Activated CD8-positive, alpha-beta T cell treated with anti-CD3 and anti-CD28 coated beads for 36 hours (primary cell): ENCODE measurements at regions of chr10 and their contacts with region 1.

Region 1: GRCh38 chr10:69004821-69005220 is 16.2 kb downstream of the KIFBP start:
- DNase-seq: no peak
- ATAC-seq: peak; percentile 64
- H3K4me3 Mint-ChIP-seq: no peak overlapping the region
- H3K27ac Mint-ChIP-seq: no peak overlapping the region
- H3K4me1 Mint-ChIP-seq: peaks cover 9% of the 10 kb centered on the region
- H3K27me3 Mint-ChIP-seq: no peaks in the 10 kb centered on the region
- CTCF ChIP-seq: peak; percentile 78

Region 2: DNA sequence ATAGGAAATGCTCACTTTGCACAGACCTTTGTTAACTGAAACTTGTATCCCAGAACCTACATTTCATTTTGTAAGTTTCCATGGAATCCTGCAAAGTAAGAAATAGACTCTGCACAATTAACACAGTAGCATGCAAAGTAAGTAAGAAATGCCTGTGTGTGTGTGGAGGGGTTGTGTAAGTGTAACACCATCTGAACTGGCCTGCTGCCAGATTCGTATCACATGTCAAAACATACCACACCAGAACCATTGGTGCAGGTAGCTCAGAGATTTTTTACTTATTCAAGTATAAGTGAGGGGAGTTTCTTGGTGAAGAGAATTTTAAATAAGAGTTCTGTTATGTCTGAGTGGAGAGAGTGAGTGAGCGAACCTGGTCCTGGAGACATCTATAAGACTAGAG is 66.7 kb before region 1 on chr10:
- CTCF ChIA-PET with region 1: no interaction called
- POLR2A ChIA-PET with region 1: no interaction called
- intact Hi-C with region 1: no loop called
- DNase-seq: no peak
- ATAC-seq: no peak
- H3K4me3 Mint-ChIP-seq: no peak overlapping the region
- H3K27ac Mint-ChIP-seq: peak overlapping the region; percentile 58
- H3K4me1 Mint-ChIP-seq: peaks cover 9% of the 10 kb centered on the region
- H3K27me3 Mint-ChIP-seq: no peaks in the 10 kb centered on the region
- CTCF ChIP-seq: no peak

Region 3: GRCh38 chr10:68988530-68989316 is 16.1 kb before region 1 on chr10 and contains the start of gene KIFBP:
- CTCF ChIA-PET with region 1: interaction called, 12 read pairs
- POLR2A ChIA-PET with region 1: interaction called, 3 read pairs
- intact Hi-C with region 1: no loop called
- DNase-seq: peak; percentile 92
- ATAC-seq: peak; percentile 87
- H3K4me3 Mint-ChIP-seq: peak within 1 kb of the TSS; percentile 98
- H3K27ac Mint-ChIP-seq: peak within 1 kb of the TSS; percentile 95
- H3K4me1 Mint-ChIP-seq: peaks cover 50% of the 10 kb centered on the region
- H3K27me3 Mint-ChIP-seq: no peaks in the 10 kb centered on the region
- CTCF ChIP-seq: peak; percentile 39
- total RNA-seq, gene KIFBP: 9.7 to 10.9 TPM

Region 4: GRCh38 chr10:69061305-69062161 is 56.7 kb after region 1 on chr10:
- CTCF ChIA-PET with region 1: interaction called, 20 read pairs
- POLR2A ChIA-PET with region 1: interaction called, 3 read pairs
- intact Hi-C with region 1: no loop called
- DNase-seq: peak; percentile 35
- ATAC-seq: peak; percentile 35
- H3K4me3 Mint-ChIP-seq: peak overlapping the region; percentile 53
- H3K27ac Mint-ChIP-seq: peak overlapping the region; percentile 81
- H3K4me1 Mint-ChIP-seq: peaks cover 51% of the 10 kb centered on the region
- H3K27me3 Mint-ChIP-seq: no peaks in the 10 kb centered on the region
- CTCF ChIP-seq: no peak

Region 5: DNA sequence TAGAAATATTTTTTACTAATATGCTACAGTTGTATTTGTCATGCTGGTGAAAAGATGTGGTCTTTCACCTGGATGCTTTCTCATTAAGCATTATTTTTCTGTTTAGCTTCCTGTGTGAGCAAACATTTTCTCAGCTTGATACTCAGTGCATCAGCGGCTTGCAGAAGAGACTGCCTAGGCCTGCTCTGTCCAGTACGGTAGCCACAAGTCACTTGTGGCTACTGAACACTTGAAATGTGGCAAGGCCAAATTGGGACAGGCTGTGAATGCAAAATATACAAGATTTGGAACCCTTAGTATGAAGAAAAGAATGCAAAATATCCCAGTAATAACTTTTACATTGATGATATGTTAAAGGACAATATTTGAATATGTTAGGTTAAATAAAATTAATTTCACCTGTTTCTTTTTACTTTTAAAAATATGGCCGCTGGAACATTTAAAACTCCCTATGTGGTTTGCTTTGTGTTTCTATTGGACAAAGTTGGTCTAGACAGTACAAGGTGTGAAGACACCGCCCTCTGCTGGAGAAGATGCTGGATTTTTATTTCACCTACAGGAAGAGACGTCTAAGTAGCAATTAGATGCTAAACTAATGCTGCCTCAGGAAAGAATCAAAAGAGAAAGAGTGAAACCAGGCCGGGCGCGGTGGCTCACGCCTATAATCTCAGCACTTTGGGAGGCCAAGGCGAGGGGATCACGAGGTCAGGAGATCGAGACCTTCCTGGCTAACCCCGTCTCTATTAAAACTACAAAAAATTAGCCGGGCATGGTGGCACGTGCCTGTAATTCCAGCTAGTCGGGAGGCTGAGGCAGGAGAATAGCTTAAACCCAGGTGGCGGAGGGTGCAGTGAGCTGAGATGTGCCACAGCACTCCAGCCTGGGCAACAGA is 88.4 kb after region 1 on chr10:
- CTCF ChIA-PET with region 1: interaction called, 97 read pairs
- POLR2A ChIA-PET with region 1: interaction called, 21 read pairs
- intact Hi-C with region 1: loop called (anchors 2 kb)
- DNase-seq: peak; percentile 94
- ATAC-seq: peak; percentile 26
- H3K4me3 Mint-ChIP-seq: peak overlapping the region; percentile 24
- H3K27ac Mint-ChIP-seq: peak overlapping the region; percentile 68
- H3K4me1 Mint-ChIP-seq: peaks cover 52% of the 10 kb centered on the region
- H3K27me3 Mint-ChIP-seq: peaks cover 1% of the 10 kb centered on the region
- CTCF ChIP-seq: peak; percentile 80

Region 6: DNA sequence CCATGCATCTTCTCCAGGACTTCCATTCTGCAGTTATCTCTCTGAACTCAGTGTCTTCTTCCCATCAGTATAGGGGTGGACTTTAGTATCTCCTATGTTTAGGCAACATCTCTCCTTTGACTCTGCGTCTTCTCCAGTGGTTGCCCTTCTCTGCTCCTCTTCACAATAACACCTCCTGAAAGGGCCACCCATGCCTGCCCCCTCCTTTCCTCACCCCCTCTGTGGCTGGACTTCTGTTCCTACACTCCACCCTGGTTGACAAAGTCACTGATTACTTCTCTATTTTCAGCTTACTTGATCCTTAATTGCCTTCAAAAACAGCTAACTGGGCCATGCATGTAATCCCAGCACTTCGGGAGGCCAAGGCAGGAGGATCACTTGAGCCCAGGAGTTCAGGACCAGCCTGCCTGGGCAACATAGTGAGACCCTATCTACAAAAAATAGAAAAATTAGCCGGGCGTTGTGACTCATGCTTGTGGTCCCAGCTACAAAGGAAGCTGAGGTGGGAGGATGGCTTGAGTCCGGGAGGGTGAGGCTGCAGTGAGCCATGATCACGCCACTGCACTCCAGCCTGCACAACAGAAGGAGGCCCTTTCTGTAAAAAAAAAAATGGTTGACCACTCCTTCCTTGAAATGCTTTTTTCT is 96.8 kb after region 1 on chr10:
- CTCF ChIA-PET with region 1: interaction called, 17 read pairs
- POLR2A ChIA-PET with region 1: interaction called, 7 read pairs
- intact Hi-C with region 1: no loop called
- DNase-seq: peak; percentile 70
- ATAC-seq: peak; percentile 81
- H3K4me3 Mint-ChIP-seq: peak overlapping the region; percentile 10
- H3K27ac Mint-ChIP-seq: peak overlapping the region; percentile 83
- H3K4me1 Mint-ChIP-seq: peaks cover 36% of the 10 kb centered on the region
- H3K27me3 Mint-ChIP-seq: no peaks in the 10 kb centered on the region
- CTCF ChIP-seq: no peak

Region 7: DNA sequence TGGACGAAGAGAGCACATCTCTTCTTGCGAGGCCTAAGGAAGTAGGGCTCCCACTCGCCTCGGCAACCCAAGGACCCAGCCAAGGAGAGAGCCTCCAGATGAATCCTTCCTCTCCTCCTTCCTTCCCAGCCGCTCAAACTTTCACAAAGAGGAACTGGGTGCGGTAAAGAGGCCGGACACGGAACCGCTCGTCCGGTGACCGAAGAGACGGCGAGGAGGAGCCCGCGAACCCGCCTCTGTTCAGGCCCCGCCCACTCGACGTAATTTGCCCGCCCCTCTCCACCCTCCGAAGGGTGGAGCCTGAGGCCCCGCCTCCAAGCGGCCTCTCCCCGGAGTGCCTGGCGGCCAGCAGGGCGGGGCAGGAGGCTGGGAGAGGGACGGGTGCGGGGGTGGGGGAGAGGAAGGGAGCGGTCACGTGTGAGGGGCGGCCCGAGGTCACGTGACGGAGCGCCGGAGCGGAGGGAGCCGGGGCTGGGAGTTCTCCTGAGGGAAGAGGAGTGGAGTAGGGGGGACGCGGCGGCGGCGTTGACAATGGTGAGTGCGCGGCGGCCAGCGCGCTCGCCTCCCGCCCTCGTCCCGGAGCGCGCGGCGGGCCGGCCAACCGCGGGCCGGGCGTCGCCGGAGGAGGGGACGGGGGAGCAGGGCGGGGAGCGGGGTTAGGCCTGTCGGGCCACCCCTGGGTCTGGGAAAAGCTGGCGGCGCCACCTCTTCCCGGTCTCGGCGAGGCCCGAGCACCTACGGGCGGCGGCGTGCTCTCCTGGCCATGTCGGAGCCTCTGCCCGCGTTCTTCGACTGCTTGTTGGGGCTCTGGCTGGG is 119.1 kb after region 1 on chr10 and contains the start of gene VPS26A:
- CTCF ChIA-PET with region 1: interaction called, 25 read pairs
- POLR2A ChIA-PET with region 1: no interaction called
- intact Hi-C with region 1: no loop called
- DNase-seq: peak; percentile 99
- ATAC-seq: peak; percentile 98
- H3K4me3 Mint-ChIP-seq: peak within 1 kb of the TSS; percentile 86
- H3K27ac Mint-ChIP-seq: peak within 1 kb of the TSS; percentile 90
- H3K4me1 Mint-ChIP-seq: peaks cover 23% of the 10 kb centered on the region
- H3K27me3 Mint-ChIP-seq: no peaks in the 10 kb centered on the region
- CTCF ChIP-seq: peak; percentile 5
- total RNA-seq, gene VPS26A: 33.1 to 34.5 TPM

Region 8: DNA sequence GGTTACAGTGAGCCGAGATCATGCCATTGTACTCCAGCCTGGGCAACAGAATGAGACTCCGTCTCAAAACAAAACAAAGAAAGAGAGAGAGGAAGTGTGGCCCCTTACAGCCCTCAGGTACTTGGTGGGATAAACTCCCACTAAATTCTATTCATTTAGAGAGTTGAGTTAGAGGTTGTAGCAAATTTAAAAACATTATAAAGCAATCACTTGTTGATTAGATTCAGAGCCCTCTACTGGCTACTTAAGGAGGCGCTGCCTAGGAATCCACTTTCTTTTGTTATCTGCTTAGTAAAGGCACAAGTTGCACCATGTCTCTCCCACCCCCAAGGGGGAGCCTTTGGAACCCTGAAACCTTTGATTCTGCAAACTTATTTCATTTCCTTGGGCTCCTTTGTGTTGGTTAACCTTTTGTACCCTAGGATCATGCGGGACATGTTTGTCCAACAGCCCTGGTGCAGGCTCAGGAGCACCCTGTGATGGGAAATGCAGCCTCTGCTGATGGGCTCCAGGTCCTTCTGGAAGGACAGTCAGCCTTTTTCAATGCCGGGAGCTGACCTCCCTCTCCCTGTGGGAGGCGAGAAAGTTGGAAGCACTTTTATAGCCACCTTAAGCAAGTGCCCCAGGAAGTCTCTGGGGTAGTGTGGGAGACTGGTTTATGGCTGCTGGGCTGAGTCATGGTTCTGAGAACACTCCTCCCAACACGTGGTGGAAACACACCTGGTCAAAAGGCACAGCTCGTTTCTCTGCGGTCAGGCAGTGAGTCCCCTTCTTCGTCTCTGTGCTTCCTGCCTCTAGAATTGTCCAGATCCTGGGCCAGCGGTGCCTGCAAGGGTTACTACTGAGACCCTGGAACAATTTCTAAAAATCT is 217.6 kb after region 1 on chr10:
- CTCF ChIA-PET with region 1: interaction called, 3 read pairs
- POLR2A ChIA-PET with region 1: no interaction called
- intact Hi-C with region 1: loop called (anchors 5 kb)
- DNase-seq: peak; percentile 92
- ATAC-seq: peak; percentile 88
- H3K4me3 Mint-ChIP-seq: peak overlapping the region; percentile 65
- H3K27ac Mint-ChIP-seq: peak overlapping the region; percentile 87
- H3K4me1 Mint-ChIP-seq: peaks cover 33% of the 10 kb centered on the region
- H3K27me3 Mint-ChIP-seq: no peaks in the 10 kb centered on the region
- CTCF ChIP-seq: peak; percentile 87